ENCODE measurements at regions of chr2 and their contacts with region 1.

Region 1: GRCh38 chr2:136384531-136385303 is 266.8 kb upstream of the CXCR4 start:
- DNase-seq: no peak
- ATAC-seq: peak in 1 of 2 donors; percentile 44
- H3K4me3 ChIP-seq: no peak overlapping the region
- H3K27ac ChIP-seq: no peak overlapping the region
- H3K4me1 ChIP-seq: no peaks in the 10 kb centered on the region
- H3K27me3 ChIP-seq: no peaks in the 10 kb centered on the region
- CTCF ChIP-seq: peak in 3 of 5 experiments; percentile 20 to 32 (median 31)
- POLR2A ChIP-seq: no peak

Region 2: DNA sequence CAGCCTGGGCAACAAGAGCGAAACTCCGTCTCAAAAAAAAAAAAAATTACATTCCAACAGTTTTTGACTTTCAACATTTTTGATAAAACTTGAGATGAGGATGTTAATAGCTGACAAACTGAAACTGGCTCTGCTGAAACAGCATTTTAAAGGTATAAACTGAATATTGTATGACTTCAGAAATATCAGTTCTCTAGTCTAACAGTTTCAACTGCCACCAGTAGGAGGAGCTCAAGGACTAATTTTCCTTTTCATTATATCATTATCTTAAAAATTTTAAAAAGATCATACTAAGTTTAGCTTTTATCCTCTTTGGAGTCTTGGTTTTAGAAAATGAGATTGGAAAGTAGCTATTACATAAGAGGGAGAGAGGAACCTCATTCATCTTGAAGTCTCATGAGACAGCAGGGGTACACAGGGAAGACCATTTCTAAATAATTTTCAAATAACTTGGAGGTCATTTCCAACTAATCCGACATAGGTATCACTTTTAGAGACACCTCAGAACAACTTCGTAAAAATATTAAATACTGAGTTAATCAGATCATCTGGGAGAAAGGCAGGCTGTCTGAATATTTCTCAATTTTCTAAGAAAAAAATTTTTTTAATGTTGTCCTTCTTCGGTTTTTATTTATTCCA is 470.9 kb before region 1 on chr2:
- in situ Hi-C with region 1: loop called (anchors 5 to 10 kb)
- intact Hi-C with region 1: loop called (anchors 2 kb)
- DNase-seq: no peak
- ATAC-seq: no peak
- H3K4me3 ChIP-seq: no peak overlapping the region
- H3K27ac ChIP-seq: no peak overlapping the region
- H3K4me1 ChIP-seq: no peaks in the 10 kb centered on the region
- H3K27me3 ChIP-seq: no peaks in the 10 kb centered on the region
- CTCF ChIP-seq: peak; percentile 35 to 74 (median 62)
- POLR2A ChIP-seq: no peak

Region 3: GRCh38 chr2:136117909-136118818 is 266.6 kb before region 1 on chr2 and contains the start of gene CXCR4:
- in situ Hi-C with region 1: no loop called
- intact Hi-C with region 1: loop called (anchors 10 kb)
- DNase-seq: peak in 1 of 2 donors; percentile 28
- ATAC-seq: peak; percentile 16 to 20
- H3K4me3 ChIP-seq: peak within 1 kb of the TSS; percentile 48 to 67 (median 56)
- H3K27ac ChIP-seq: peak within 1 kb of the TSS in 1 of 4 donors; percentile 57
- H3K4me1 ChIP-seq: peaks cover 4 to 34% of the 10 kb centered on the region in 2 donors
- H3K27me3 ChIP-seq: peaks cover 40 to 91% (median 54%) of the 10 kb centered on the region in 3 donors
- CTCF ChIP-seq: no peak
- POLR2A ChIP-seq: peak; percentile 26 to 51
- total RNA-seq, gene CXCR4: 2.5 to 6.6 (median 4.0) TPM

Region 4: GRCh38 chr2:136255648-136256463 is 128.9 kb before region 1 on chr2:
- in situ Hi-C with region 1: no loop called
- intact Hi-C with region 1: loop called (anchors 10 kb)
- DNase-seq: no peak
- ATAC-seq: no peak
- H3K4me3 ChIP-seq: no peak overlapping the region
- H3K27ac ChIP-seq: no peak overlapping the region
- H3K4me1 ChIP-seq: no peaks in the 10 kb centered on the region
- H3K27me3 ChIP-seq: no peaks in the 10 kb centered on the region
- CTCF ChIP-seq: no peak
- POLR2A ChIP-seq: no peak

Measured in gastrocnemius medialis (tissue), 4 donors.